ENCODE measurements at regions of chr11 and their contacts with region 1.

Region 1: DNA sequence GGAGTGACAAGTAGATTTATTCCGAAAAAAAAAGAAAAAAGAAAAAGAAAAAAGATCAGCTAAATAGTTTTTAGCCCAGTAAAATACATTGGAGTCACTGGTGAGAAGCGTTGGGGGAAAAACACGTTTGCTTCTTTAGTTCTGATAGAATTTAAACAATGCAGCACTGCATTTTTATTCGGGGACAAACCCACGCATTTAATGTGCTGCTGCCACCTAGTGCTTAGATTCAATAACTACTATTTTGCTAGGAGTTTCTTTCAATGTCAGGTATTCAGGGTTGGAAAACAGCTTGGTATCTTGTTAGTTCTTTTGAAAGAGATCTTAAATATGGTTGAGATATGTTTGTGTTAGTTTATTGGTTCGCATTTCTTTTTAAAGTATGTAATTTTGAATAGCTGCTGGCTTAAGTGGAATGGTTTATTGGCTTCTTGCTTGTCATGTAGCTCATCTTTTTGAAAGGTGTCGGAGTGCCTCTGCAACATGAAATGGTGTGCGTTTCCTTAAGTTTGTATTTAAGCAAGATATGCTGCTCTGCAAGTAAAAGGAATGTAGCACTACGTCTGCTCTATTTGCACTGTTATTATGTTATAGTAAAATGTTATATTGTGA is 41.9 kb downstream of the SVIP start:
- DNase-seq: peak; percentile 8 to 31
- ATAC-seq: peak; percentile 71 to 79; a peak in 5 of 6 replicates
- H3K4me3 ChIP-seq: no peak overlapping the region
- H3K27ac ChIP-seq: no peak overlapping the region
- H3K4me1 ChIP-seq: peaks cover 9% of the 10 kb centered on the region; the same call in 2 of the 3 replicates
- CTCF ChIP-seq: peak; percentile 86
- EP300 ChIP-seq: no peak
- POLR2A ChIP-seq: no peak
- RAD21 ChIP-seq: peak; percentile 78 to 79

Region 2: DNA sequence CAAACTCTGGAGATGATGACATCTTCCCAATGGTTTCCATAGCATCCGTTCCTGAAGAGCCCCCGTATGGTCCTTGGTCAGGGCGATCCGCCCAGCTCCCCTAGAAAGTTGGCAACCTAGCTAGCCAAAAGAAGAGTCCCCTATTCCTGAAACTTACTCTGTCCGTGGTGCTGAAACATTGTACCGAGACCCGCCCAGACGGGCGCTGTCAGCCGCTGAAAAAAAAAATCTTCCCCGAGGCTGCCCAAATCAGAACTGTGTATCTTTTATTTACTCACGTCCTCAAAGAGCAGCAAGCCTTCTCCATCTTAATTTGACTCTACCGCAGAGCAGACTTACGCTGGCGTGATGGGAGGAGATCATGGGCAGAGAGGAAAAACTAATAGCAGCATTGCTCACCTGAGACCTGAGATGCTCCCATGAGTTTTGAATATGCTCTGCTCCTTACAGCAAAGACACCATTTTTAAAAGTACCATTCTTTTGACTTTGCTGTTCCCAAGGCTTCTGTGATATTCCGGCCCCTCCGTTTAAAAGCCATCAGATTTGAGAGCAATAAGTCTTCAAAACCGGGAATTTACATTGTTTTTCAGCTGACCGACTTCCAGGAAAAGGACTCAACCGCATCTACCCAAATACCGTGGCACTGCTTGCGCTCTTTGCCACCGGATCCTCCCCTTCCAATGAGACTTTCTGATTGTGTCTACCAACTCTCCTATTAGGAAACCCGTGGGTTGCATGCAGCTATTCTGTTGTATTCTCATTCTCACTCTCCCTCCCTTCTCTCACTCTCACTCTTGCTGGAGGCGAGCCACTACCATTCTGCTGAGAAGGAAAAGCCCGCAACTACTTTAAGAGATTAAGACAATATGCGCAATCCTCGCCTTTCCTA is 449.8 kb before region 1 on chr11 and contains the start of gene SLC17A6:
- CTCF ChIA-PET with region 1: interaction called, 14 read pairs
- POLR2A ChIA-PET with region 1: no interaction called
- DNase-seq: peak in 1 of 2 experiments; percentile 5
- ATAC-seq: peak in 1 of 2 experiments; percentile 63; a peak in 2 of 6 replicates
- H3K4me3 ChIP-seq: no peak within 1 kb of the TSS
- H3K27ac ChIP-seq: no peak within 1 kb of the TSS
- H3K4me1 ChIP-seq: no peaks in the 10 kb centered on the region
- CTCF ChIP-seq: no peak
- EP300 ChIP-seq: no peak
- POLR2A ChIP-seq: no peak
- RAD21 ChIP-seq: no peak
- polyA plus RNA-seq, gene SLC17A6: not detected in 2 replicates

Region 3: GRCh38 chr11:22829231-22830081 is 41.8 kb after region 1 on chr11 and contains the start of gene SVIP:
- CTCF ChIA-PET with region 1: interaction called, 14 read pairs
- POLR2A ChIA-PET with region 1: interaction called, 4 read pairs
- DNase-seq: peak; percentile 65 to 93
- ATAC-seq: peak; percentile 91 to 97
- H3K4me3 ChIP-seq: peak within 1 kb of the TSS; percentile 80
- H3K27ac ChIP-seq: peak within 1 kb of the TSS; percentile 73 to 88
- H3K4me1 ChIP-seq: peaks cover 6% of the 10 kb centered on the region; the same call in 1 of the 3 replicates
- CTCF ChIP-seq: peak; percentile 58
- EP300 ChIP-seq: no peak
- POLR2A ChIP-seq: peak; percentile 52; the same call in 1 of the 2 replicates
- RAD21 ChIP-seq: peak; percentile 47 to 53
- polyA plus RNA-seq, gene SVIP: 13.9 and 19.5 TPM in 2 replicates

Region 4: DNA sequence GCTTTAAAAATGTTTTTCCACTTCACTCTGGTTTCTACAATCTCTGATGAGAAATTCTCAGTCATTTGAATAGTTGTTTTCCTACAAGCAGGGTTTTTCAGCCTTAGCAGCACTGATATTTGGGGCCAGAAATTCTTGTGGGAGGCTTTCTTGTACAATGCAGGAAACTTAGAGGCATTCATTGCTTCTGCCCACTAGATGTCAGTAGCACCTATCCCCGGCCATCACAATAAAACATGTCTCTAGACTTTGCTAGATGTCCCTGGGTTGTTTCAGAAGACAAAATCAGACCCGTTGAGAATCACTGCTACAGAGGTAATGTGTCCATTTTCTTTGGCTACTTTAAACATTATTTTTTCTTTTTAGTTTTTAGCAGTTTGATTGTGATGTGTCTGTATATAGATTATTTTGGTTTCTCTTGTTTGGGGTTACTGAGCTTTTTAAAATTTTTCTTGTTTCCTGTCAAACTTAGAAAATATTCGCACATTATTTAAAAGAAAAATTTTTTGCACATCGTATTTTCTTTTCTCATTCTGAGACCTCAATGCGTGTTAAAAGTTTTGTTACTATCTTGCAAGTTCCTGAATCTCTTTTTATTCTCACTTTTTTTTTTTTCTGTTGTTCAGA is 133.4 kb after region 1 on chr11:
- CTCF ChIA-PET with region 1: no interaction called
- POLR2A ChIA-PET with region 1: no interaction called
- DNase-seq: peak; percentile 7 to 55
- ATAC-seq: peak; percentile 73 to 87; a peak in 5 of 6 replicates
- H3K4me3 ChIP-seq: no peak overlapping the region
- H3K27ac ChIP-seq: no peak overlapping the region
- H3K4me1 ChIP-seq: no peaks in the 10 kb centered on the region
- CTCF ChIP-seq: peak; percentile 44
- EP300 ChIP-seq: no peak
- POLR2A ChIP-seq: no peak
- RAD21 ChIP-seq: peak; percentile 27 to 37; a peak in 4 of 5 replicates